Ascending aorta (tissue), 2 donors: ENCODE measurements at regions of chr5 and their contacts with region 1.

Region 1: DNA sequence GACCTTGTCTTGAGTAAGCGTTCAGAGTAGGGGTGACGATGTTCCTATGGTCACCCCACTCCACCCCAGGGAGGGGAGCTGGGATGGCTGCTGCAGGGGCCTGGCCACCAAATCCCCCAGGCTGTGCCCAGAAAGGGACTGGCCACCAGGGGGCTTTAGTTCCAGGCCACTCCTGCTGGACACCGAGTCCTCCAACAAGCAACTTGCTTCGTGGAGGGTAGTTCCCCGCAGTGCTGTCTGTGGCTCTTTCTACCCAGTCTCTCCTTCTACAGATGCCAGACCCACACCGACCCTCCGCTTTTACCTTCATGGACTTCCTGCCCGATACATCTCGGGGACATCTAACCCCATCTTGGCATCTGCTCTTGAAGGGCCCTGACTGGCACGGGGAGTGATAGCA is 35.7 kb upstream of the GABRP start:
- DNase-seq: peak in 1 of 2 donors; percentile 57
- H3K4me3 ChIP-seq: no peak overlapping the region
- H3K27ac ChIP-seq: no peak overlapping the region
- H3K4me1 ChIP-seq: peaks cover 0 to 6% of the 10 kb centered on the region in 2 donors
- H3K27me3 ChIP-seq: no peaks in the 10 kb centered on the region
- CTCF ChIP-seq: no peak

Region 2: GRCh38 chr5:171342362-171343111 is 594.7 kb after region 1 on chr5:
- intact Hi-C with region 1: loop called (anchors 10 kb)
- DNase-seq: no peak
- H3K4me3 ChIP-seq: no peak overlapping the region
- H3K27ac ChIP-seq: no peak overlapping the region
- H3K4me1 ChIP-seq: no peaks in the 10 kb centered on the region
- H3K27me3 ChIP-seq: no peaks in the 10 kb centered on the region
- CTCF ChIP-seq: peak in 2 of 3 experiments; percentile 24 to 51